Calu3 (cell line): ENCODE measurements at regions of chr17 and their contacts with region 1.

Region 1: DNA sequence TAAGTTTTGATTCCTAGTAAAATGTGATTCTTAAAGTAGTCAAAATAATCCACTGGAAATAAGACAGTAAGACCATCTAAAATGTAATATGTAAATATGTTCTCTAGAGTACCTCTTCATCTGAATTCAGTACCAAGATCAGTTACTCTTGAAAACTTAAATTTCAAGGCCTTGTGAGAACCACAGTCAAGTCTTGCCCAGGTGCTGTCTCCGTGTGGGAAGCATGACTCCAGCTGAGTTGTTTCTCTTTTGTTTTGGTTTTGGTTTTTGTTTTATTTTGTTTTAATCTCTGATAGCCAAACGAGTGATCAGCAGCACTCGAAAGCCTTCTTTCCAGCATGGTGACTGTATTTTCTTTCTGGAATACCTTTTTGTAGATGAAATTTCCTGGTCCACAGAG is 907.0 kb downstream of the KCNJ18 start:
- DNase-seq: no peak
- H3K4me3 Mint-ChIP-seq: no peak overlapping the region
- H3K27ac Mint-ChIP-seq: no peak overlapping the region
- H3K4me1 Mint-ChIP-seq: no peaks in the 10 kb centered on the region
- H3K27me3 Mint-ChIP-seq: no peaks in the 10 kb centered on the region
- CTCF ChIP-seq: no peak

Region 2: GRCh38 chr17:22569459-22570143 is 29.7 kb before region 1 on chr17:
- CTCF ChIA-PET with region 1: no interaction called
- intact Hi-C with region 1: loop called (anchors 5 kb)
- DNase-seq: no peak
- H3K4me3 Mint-ChIP-seq: no peak overlapping the region
- H3K27ac Mint-ChIP-seq: no peak overlapping the region
- H3K4me1 Mint-ChIP-seq: no peaks in the 10 kb centered on the region
- H3K27me3 Mint-ChIP-seq: no peaks in the 10 kb centered on the region
- CTCF ChIP-seq: no peak